CD4-positive, alpha-beta memory T cell (primary cell): ENCODE measurements at regions of chr12 and their contacts with region 1.

Region 1: DNA sequence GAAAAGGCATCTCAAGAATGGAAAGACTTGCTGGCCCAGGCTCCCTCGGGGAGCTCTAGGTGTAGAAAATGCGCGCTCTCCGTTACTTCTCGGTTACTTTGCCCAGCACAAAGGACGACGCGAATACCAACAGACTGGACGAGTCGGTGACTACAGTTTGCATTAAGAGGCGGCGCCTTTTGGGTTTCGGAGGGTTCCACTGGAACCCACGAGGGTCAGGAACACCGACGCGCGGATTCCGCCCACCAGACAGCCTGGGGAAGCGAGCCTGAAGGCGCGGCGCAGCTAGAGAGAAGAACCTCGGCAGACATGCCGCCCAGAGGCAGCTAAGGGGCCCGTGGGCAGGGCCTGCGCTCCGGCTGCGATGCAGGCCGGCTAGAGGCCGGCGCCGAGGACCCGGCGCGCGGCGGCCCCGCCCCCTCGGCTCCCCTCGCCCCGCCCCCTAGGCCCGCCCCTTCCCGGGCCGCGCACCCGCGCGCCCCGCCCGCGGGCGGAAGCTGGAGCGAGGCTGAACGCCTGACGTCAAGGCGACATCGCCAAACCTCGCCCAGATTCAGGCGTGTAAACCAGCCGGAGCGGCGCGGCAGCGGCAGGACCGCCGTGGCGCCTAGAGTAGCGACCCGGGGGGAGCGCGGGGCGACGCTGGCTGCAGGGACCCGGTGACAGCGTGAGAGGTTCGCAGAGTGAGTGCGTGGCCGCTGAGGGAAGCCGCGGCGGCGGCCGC is at the start of gene RAP1B:
- DNase-seq: peak; percentile 90 to 91 (median 90)
- H3K4me3 ChIP-seq: peak within 1 kb of the TSS; percentile 88
- H3K4me3 Mint-ChIP-seq: peak within 1 kb of the TSS; percentile 90 to 98 (median 97)
- H3K27ac ChIP-seq: peak within 1 kb of the TSS; percentile 88
- H3K27ac Mint-ChIP-seq: peak within 1 kb of the TSS; percentile 94 to 99 (median 97)
- H3K4me1 ChIP-seq: peaks cover 39% of the 10 kb centered on the region
- H3K4me1 Mint-ChIP-seq: peaks cover 26 to 49% (median 37%) of the 10 kb centered on the region in 4 donors
- H3K27me3 ChIP-seq: no peaks in the 10 kb centered on the region
- H3K27me3 Mint-ChIP-seq: no peaks in the 10 kb centered on the region
- total RNA-seq, gene RAP1B: 193 to 195 TPM

Region 2: GRCh38 chr12:68358532-68359485 is 251.7 kb before region 1 on chr12:
- CTCF ChIA-PET with region 1: interaction called, 46 read pairs
- POLR2A ChIA-PET with region 1: interaction called, 55 read pairs
- intact Hi-C with region 1: no loop called
- DNase-seq: peak; percentile 71 to 76 (median 74)
- H3K4me3 ChIP-seq: no peak overlapping the region
- H3K4me3 Mint-ChIP-seq: no peak overlapping the region
- H3K27ac ChIP-seq: no peak overlapping the region
- H3K27ac Mint-ChIP-seq: peak overlapping the region; percentile 2 to 80 (median 65)
- H3K4me1 ChIP-seq: peaks cover 21% of the 10 kb centered on the region
- H3K4me1 Mint-ChIP-seq: peaks cover 18 to 35% (median 24%) of the 10 kb centered on the region in 4 donors
- H3K27me3 ChIP-seq: no peaks in the 10 kb centered on the region
- H3K27me3 Mint-ChIP-seq: no peaks in the 10 kb centered on the region

Region 3: DNA sequence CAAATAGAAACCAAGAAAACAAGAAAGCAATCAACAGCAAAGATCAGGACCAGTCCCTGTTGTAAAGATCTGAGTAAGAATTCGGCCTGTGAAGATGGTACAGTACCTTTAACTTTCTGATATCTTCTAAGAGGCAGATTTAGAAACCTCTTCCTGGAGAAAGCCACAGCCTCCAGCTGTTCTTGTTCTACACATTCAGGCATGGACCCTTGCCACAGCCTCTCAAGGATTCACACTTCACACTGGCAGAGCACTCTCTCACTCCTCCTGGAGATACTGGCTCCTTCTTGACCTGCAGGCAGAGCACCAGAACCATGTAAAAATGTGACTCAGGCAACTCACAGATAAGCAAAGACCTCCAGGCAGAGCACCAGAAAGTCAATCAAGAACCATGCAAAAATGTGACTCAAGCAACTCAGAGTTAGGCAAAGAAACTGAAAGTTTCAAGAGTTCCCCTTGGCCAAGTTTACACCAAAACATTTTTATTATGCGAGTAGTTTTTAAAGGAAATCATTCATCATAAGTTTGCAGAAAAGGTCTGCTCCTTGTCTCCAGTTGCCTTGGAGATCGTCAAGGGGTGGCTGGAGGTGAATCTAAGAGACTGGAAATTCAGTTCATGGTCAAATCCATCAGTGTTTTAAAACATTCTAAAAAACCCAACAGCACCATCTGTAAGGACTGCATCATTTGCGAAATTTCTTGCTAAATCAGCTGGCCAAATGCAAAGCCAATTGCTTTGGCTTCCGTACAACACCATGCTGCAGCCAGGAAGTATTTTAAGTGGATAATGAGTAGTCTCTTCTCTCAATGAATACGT is 159.1 kb before region 1 on chr12:
- CTCF ChIA-PET with region 1: no interaction called
- POLR2A ChIA-PET with region 1: interaction called, 27 read pairs
- intact Hi-C with region 1: no loop called
- DNase-seq: peak; percentile 24 to 57 (median 44)
- H3K4me3 ChIP-seq: peak overlapping the region in 1 of 2 donors; percentile 3
- H3K4me3 Mint-ChIP-seq: peak overlapping the region; percentile 66 to 90 (median 84)
- H3K27ac ChIP-seq: peak overlapping the region; percentile 46
- H3K27ac Mint-ChIP-seq: peak overlapping the region; percentile 74 to 92 (median 88)
- H3K4me1 ChIP-seq: peaks cover 96% of the 10 kb centered on the region
- H3K4me1 Mint-ChIP-seq: peaks cover 61 to 97% (median 86%) of the 10 kb centered on the region in 4 donors
- H3K27me3 ChIP-seq: no peaks in the 10 kb centered on the region
- H3K27me3 Mint-ChIP-seq: no peaks in the 10 kb centered on the region

Region 4: DNA sequence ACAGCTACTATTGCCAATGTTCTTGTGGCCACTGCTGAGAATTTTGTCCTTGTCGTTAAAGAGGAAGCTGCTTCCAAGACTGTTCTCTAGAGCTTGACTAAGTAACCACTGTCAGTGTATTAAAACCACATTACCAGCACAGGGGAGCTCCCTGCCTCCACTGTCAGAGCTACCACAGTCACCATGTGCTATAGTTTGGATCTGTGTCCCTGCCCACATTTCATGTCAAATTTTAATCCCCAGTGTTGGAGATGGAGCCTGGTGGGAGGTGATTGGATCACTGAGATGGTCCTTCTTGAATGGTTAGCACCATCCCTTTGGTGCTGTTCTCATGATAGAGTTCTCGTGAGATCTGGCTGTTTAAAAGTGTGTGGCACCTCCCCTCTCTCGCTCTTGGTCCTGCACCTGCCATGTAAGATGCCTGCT is 23.1 kb before region 1 on chr12:
- CTCF ChIA-PET with region 1: interaction called, 6 read pairs
- POLR2A ChIA-PET with region 1: interaction called, 61 read pairs
- intact Hi-C with region 1: loop called (anchors 1 kb)
- DNase-seq: peak in 4 of 5 donors; percentile 36 to 50 (median 48)
- H3K4me3 ChIP-seq: no peak overlapping the region
- H3K4me3 Mint-ChIP-seq: peak overlapping the region in 5 of 8 donors; percentile 17 to 44 (median 22)
- H3K27ac ChIP-seq: no peak overlapping the region
- H3K27ac Mint-ChIP-seq: peak overlapping the region in 5 of 7 donors; percentile 15 to 80 (median 59)
- H3K4me1 ChIP-seq: peaks cover 37% of the 10 kb centered on the region
- H3K4me1 Mint-ChIP-seq: peaks cover 29 to 43% (median 37%) of the 10 kb centered on the region in 4 donors
- H3K27me3 ChIP-seq: no peaks in the 10 kb centered on the region
- H3K27me3 Mint-ChIP-seq: no peaks in the 10 kb centered on the region

Region 5: DNA sequence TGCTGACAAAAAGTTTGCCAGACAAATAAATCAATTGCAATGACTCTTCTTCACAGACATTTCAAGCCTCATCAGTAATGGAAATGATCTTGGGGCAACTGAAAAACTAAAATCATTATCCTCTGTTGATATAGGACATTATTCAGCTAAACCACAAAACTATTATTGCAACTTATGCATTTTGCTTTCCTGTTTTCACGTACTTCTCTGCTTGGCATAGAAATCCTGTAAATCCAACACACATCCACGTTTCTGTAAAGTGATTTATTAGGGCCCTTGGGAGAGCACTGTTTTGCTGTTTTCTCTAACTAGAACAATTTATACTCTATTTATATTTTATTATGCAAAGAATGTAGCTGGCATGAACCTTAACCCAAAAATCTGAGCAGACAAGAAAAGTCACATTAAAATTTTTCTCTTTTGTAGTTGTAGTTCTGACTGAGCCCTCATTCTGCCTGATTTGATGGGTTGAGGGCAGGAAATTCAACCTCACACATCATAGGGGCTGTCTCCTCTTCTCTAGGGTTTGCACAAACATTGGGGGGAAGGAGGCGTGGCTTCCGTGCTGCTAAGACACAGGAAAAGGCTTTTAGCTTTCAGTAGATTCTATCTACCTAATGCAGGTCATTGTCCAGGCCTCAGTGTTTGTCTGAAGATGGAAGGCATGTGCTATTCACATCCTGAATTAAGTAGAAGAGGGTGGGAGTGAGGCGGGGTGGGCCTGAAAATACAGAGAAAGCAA is 64.7 kb after region 1 on chr12:
- CTCF ChIA-PET with region 1: no interaction called
- POLR2A ChIA-PET with region 1: interaction called, 17 read pairs
- intact Hi-C with region 1: loop called (anchors 1 kb)
- DNase-seq: peak; percentile 66 to 76 (median 75)
- H3K4me3 ChIP-seq: no peak overlapping the region
- H3K4me3 Mint-ChIP-seq: peak overlapping the region; percentile 60 to 89 (median 73)
- H3K27ac ChIP-seq: peak overlapping the region; percentile 24
- H3K27ac Mint-ChIP-seq: peak overlapping the region; percentile 80 to 94 (median 92)
- H3K4me1 ChIP-seq: peaks cover 55% of the 10 kb centered on the region
- H3K4me1 Mint-ChIP-seq: peaks cover 32 to 59% (median 45%) of the 10 kb centered on the region in 4 donors
- H3K27me3 ChIP-seq: no peaks in the 10 kb centered on the region
- H3K27me3 Mint-ChIP-seq: no peaks in the 10 kb centered on the region

Region 6: DNA sequence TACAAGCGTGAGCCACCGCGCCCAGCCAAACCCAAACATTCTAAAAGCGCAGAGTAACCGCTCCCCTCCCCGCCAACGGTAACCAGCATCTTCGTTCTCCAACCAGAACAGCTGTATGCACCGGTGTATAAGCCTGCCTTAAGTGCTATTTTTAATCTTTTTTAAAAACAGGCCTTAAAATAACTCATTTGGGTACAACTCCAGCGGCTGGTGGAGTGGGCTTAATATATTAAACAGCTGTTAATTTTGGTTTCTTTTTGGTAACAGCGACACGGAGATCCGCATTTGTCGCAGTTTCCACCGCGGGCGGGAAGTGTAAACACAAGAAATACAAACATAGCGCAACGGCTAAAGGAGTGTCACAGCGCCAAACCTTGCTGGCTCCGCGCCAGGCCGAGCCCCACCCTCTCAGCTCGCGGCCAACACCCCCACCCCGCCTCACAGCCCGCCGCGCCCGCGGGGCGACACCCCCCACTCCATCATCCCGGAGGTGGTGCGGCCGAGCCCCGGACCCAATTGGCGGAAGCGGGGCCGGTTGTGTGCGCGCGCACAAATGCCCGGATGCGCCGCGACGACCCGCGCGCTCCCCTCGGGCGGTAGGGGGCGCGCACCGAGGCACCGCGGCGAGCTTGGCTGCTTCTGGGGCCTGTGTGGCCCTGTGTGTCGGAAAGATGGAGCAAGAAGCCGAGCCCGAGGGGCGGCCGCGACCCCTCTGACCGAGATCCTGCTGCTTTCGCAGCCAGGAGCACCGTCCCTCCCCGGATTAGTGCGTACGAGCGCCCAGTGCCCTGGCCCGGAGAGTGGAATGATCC is 197.2 kb after region 1 on chr12 and contains the start of gene MDM2:
- CTCF ChIA-PET with region 1: no interaction called
- POLR2A ChIA-PET with region 1: interaction called, 32 read pairs
- intact Hi-C with region 1: loop called (anchors 1 kb)
- DNase-seq: peak; percentile 97 to 99 (median 99)
- H3K4me3 ChIP-seq: peak within 1 kb of the TSS; percentile 42 to 94
- H3K4me3 Mint-ChIP-seq: peak within 1 kb of the TSS; percentile 95 to 97 (median 96)
- H3K27ac ChIP-seq: peak within 1 kb of the TSS; percentile 92
- H3K27ac Mint-ChIP-seq: peak within 1 kb of the TSS; percentile 98 to 99 (median 99)
- H3K4me1 ChIP-seq: peaks cover 28% of the 10 kb centered on the region
- H3K4me1 Mint-ChIP-seq: peaks cover 9 to 33% (median 22%) of the 10 kb centered on the region in 4 donors
- H3K27me3 ChIP-seq: no peaks in the 10 kb centered on the region
- H3K27me3 Mint-ChIP-seq: no peaks in the 10 kb centered on the region
- total RNA-seq, gene MDM2: 117 to 121 TPM

Region 7: GRCh38 chr12:70267550-70267949 is 1657.0 kb after region 1 on chr12:
- CTCF ChIA-PET with region 1: no interaction called
- POLR2A ChIA-PET with region 1: no interaction called
- intact Hi-C with region 1: no loop called
- DNase-seq: no peak
- H3K4me3 ChIP-seq: no peak overlapping the region
- H3K4me3 Mint-ChIP-seq: peak overlapping the region in 2 of 8 donors; percentile 42 to 49
- H3K27ac ChIP-seq: no peak overlapping the region
- H3K27ac Mint-ChIP-seq: no peak overlapping the region
- H3K4me1 ChIP-seq: peaks cover 74% of the 10 kb centered on the region
- H3K4me1 Mint-ChIP-seq: peaks cover 55 to 88% (median 70%) of the 10 kb centered on the region in 4 donors
- H3K27me3 ChIP-seq: no peaks in the 10 kb centered on the region
- H3K27me3 Mint-ChIP-seq: no peaks in the 10 kb centered on the region